H1 (cell line): ENCODE measurements at regions of chr3 and their contacts with region 1.

Region 1: DNA sequence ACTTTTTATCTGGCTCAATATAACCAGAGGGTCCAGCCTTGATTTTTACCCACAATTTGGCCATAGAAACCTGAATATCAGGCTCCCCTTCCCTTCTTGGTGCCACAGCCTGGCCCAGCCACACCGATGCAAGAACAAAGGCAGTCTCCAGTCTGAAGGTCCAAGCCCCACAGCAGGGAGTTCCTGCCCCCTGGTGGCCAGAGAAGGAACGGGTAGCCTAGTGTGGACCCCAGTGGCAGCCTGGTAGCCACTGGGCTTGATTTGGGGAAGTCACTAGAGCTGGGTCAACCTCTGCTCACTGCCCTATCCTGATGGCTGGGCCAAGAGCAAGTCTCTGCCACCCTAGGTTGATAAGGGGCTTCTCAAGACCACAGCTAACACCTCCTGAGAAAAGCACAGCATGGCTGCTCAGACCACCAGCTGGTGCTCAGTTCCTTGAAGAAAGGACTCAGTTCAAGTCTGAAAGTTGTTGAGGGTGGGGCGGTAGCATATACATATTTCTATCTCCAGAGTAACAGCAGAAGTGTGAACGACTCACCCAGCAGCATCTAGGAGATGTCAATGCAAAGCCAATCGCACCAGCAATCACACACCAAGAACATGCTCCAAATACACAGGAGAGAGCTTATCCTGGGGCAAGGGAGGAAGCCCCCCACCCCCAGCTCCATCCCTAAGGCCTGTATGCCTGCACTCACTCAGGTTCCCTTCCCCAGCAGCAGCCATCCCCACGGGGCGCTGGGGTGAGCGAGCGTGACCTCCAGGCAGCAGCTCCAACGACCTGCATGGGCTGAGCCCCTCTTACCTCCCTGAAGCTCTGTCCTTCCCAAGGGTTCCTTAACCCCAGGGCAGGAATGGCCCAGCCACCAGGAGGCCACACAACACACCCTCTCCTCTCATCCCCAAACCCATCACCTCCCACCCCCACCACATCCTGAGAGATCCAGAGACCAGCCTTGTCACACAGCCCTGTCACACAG is 7.6 kb downstream of the PFKFB4 start:
- DNase-seq: peak; percentile 54 to 95
- H3K4me3 ChIP-seq: no peak overlapping the region
- H3K27ac ChIP-seq: peak overlapping the region; percentile 25; the same call in 1 of the 2 replicates
- H3K4me1 ChIP-seq: peaks cover 0 to 1% (median under 1%) of the 10 kb centered on the region in 4 experiments; a peak in 3 of 7 replicates
- H3K27me3 ChIP-seq: no peaks in the 10 kb centered on the region
- CTCF ChIP-seq: peak in 2 of 3 experiments; percentile 95 to 99; a peak in 3 of 4 replicates
- EP300 ChIP-seq: no peak
- POLR2A ChIP-seq: no peak
- RAD21 ChIP-seq: peak; percentile 90 to 94

Region 2: DNA sequence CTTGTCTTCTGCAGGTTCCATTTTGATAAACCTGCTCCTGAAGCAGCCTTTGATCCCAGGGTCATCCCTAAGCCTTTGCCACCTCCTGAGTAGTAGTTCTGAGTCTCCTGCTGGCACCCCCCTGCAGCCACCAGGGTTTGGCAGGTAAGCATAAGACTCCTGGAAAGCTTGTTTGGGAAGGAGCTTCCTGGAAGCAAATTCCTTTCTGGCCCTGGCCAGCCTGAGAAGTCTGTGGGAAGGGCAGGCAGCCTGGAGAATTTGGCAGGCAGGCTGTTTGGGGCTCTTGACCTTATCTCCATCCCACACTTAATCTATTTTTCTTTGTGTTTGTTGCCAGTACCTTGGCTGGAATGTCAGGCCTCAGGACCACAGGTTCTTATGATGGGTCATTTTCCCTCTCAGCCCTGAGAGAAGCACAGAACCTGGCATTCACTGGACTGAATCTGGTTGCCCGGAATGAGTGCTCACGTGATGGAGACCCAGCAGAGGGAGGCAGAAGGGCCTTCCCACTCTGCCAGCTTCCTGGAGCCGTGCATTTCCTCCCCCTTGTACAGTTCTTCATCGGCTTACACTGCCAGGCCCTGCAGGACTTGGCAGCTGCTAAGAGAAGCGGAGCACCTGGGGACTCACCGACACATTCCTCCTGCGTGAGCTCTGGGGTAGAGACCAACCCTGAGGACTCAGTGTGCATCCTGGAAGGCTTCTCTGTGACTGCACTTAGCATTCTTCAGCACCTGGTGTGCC is 89.1 kb before region 1 on chr3:
- CTCF ChIA-PET with region 1: interaction called, 67 read pairs
- POLR2A ChIA-PET with region 1: interaction called, 14 read pairs
- DNase-seq: no peak
- H3K4me3 ChIP-seq: no peak overlapping the region
- H3K27ac ChIP-seq: no peak overlapping the region
- H3K4me1 ChIP-seq: peaks cover 0 to 3% (median 0%) of the 10 kb centered on the region in 4 experiments; a peak in 1 of 7 replicates
- H3K27me3 ChIP-seq: no peaks in the 10 kb centered on the region
- CTCF ChIP-seq: no peak
- EP300 ChIP-seq: no peak
- POLR2A ChIP-seq: no peak
- RAD21 ChIP-seq: no peak

Region 3: DNA sequence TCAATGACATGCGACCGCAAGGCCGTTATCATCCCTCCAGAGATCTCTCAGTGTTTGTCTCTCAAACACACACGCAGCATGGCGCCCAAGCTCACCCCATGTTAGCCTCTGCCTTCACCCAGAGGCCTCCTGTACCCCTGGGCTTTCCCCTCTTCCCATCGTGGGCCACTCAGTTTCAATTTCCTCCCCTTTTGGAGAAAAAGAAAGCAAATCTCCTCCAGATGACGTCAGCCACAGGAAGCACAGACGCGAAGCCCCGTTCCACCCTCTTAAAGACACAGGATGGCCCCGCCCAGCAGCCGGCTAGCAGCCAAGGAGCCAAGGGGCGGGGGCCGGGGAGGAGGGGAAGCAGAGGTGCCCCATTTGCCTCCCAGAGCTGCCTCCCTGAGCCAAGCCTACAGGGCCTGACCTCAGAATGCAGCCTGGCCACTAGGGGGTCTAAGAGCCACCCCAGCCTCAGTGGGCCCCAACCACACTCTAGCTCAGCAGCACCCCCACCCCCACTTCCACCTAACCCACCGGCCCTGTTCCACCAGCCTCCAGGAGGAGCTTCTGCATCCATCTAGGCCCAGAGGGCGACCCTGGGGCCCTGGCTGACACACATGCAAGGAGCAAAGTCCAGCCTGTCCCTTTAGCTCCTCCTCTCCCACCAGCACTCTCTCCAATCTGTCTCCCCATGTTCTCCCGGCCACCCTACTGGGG is 76.0 kb before region 1 on chr3:
- CTCF ChIA-PET with region 1: interaction called, 46 read pairs
- POLR2A ChIA-PET with region 1: interaction called, 34 read pairs
- DNase-seq: peak; percentile 89 to 94
- H3K4me3 ChIP-seq: peak overlapping the region; percentile 54 to 79 (median 69)
- H3K27ac ChIP-seq: peak overlapping the region; percentile 97
- H3K4me1 ChIP-seq: peaks cover 0 to 28% (median 19%) of the 10 kb centered on the region in 4 experiments; a peak in 6 of 7 replicates
- H3K27me3 ChIP-seq: no peaks in the 10 kb centered on the region
- CTCF ChIP-seq: peak in 2 of 3 experiments; percentile 56 to 65; a peak in 3 of 4 replicates
- EP300 ChIP-seq: no peak
- POLR2A ChIP-seq: peak in 1 of 2 experiments; percentile 87; a peak in 1 of 3 replicates
- RAD21 ChIP-seq: peak; percentile 27 to 43; a peak in 3 of 4 replicates

Region 4: GRCh38 chr3:48528754-48529153 is 20.3 kb before region 1 on chr3:
- CTCF ChIA-PET with region 1: interaction called, 35 read pairs
- POLR2A ChIA-PET with region 1: no interaction called
- DNase-seq: no peak
- H3K4me3 ChIP-seq: no peak overlapping the region
- H3K27ac ChIP-seq: no peak overlapping the region
- H3K4me1 ChIP-seq: no peaks in the 10 kb centered on the region
- H3K27me3 ChIP-seq: no peaks in the 10 kb centered on the region
- CTCF ChIP-seq: no peak
- EP300 ChIP-seq: no peak
- POLR2A ChIP-seq: no peak
- RAD21 ChIP-seq: no peak

Region 5: DNA sequence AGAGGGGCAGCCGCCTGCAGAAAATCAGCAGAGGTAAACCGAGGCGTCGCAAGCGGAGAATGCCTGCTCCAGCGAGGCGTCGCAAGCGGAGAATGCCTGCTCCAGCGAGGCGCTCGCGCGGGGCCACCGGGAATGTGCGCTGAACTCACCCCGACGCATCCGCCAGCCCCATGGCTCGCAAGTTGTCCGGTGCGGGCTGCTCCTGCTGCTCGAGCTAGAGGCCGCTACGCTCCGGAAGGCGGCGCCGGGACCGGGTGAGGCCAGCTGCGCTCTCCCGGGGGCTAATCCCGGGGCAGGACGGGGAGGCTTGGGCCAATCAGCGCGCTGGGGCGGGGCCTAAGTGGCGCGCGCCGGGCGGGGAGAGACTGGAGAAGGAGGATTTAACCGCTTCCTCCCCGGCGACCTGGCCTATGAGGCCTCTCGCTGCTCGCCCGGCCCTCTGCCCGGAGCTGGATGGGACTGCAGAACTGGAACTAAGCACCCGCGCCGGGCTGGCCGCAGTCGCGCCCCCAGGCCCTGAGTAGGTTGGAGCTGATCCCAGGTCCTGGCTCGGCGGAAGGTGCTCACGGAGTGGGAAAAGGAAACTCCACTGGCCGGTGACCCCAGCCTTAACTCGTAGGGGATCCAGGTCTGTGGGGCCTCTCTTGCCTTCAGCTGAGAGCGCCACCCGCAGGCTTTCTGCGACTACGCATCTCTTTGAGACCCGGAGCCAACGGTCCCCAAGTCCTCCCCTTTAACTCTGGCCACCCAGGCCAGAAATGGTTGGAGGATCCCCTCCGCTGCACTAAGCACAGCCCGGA is 86.4 kb after region 1 on chr3 and contains the start of gene SLC26A6:
- CTCF ChIA-PET with region 1: interaction called, 15 read pairs
- POLR2A ChIA-PET with region 1: interaction called, 3 read pairs
- DNase-seq: peak; percentile 90 to 98
- H3K4me3 ChIP-seq: peak within 1 kb of the TSS; percentile 75 to 84 (median 84)
- H3K27ac ChIP-seq: peak within 1 kb of the TSS; percentile 58; the same call in 1 of the 2 replicates
- H3K4me1 ChIP-seq: peaks cover 3 to 6% (median 5%) of the 10 kb centered on the region in 4 experiments
- H3K27me3 ChIP-seq: no peaks in the 10 kb centered on the region; a peak in 1 of 7 replicates
- CTCF ChIP-seq: peak in 2 of 3 experiments; percentile 76 to 86; a peak in 3 of 4 replicates
- EP300 ChIP-seq: no peak
- POLR2A ChIP-seq: peak in 1 of 2 experiments; percentile 81; a peak in 1 of 3 replicates
- RAD21 ChIP-seq: peak; percentile 55 to 67
- total RNA-seq, gene SLC26A6: 50.4 and 51.2 TPM in 2 replicates